ENCODE measurements at regions of chr14 and their contacts with region 1.

Region 1: GRCh38 chr14:56129933-56130332 is 11.7 kb downstream of the PELI2 start:
- DNase-seq: no peak
- H3K4me3 Mint-ChIP-seq: no peak overlapping the region
- H3K27ac Mint-ChIP-seq: no peak overlapping the region
- H3K4me1 Mint-ChIP-seq: peaks cover 8% of the 10 kb centered on the region
- H3K27me3 Mint-ChIP-seq: peaks cover 2% of the 10 kb centered on the region

Region 2: GRCh38 chr14:56117765-56118610 is 11.9 kb before region 1 on chr14 and contains the start of gene PELI2:
- intact Hi-C with region 1: loop called (anchors 1 kb)
- DNase-seq: peak; percentile 62
- H3K4me3 Mint-ChIP-seq: peak within 1 kb of the TSS; percentile 88
- H3K27ac Mint-ChIP-seq: peak within 1 kb of the TSS; percentile 54
- H3K4me1 Mint-ChIP-seq: peaks cover 22% of the 10 kb centered on the region
- H3K27me3 Mint-ChIP-seq: peaks cover 46% of the 10 kb centered on the region
- total RNA-seq, gene PELI2: 2.3 and 2.8 TPM in 2 replicates

Region 3: DNA sequence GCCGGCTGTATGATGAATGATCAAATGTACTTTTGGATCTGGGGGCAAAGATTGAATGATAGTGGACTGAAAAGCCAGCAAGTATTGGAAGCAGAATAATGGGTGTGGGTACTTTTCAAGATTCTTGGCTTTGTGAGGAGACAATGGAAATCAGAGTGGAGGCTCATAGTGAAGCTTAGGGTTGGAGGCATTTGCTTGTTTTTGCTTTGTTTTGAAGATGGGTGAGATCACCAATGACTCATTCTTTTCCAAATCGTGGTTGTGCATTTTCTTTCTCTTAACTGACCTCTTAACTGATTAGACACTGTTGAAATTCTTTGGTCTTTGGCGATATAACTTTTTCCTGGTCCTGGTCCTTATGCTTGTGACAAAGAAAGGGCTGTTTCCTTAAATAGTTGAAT is 42.6 kb after region 1 on chr14:
- intact Hi-C with region 1: loop called (anchors 2 kb)
- DNase-seq: no peak
- H3K4me3 Mint-ChIP-seq: no peak overlapping the region
- H3K27ac Mint-ChIP-seq: peak overlapping the region; percentile 78
- H3K4me1 Mint-ChIP-seq: peaks cover 24% of the 10 kb centered on the region
- H3K27me3 Mint-ChIP-seq: no peaks in the 10 kb centered on the region

Measured in activated T-helper 2 cell treated with anti-CD3 and anti-CD28 coated beads, Interferon-gamma antibody, Interleukin-2, Interleukin-4, amounts not matched to agents 10 μg/mL and 5 μg/mL and 100 μg/mL, durations not matched to agents 14 hours and 24 hours and 36 hours (primary cell).